GM13977 (cell line): ENCODE measurements at regions of chrX and their contacts with region 1.

Region 1: GRCh38 chrX:148049441-148049840 is 68.3 kb downstream of the FMR1NB start:
- DNase-seq: peak; percentile 49
- CTCF ChIP-seq: peak; percentile 47

Region 2: GRCh38 chrX:147850875-147851274 is 198.6 kb before region 1 on chrX:
- in situ Hi-C with region 1: no loop called
- DNase-seq: no peak
- CTCF ChIP-seq: no peak

Region 3: DNA sequence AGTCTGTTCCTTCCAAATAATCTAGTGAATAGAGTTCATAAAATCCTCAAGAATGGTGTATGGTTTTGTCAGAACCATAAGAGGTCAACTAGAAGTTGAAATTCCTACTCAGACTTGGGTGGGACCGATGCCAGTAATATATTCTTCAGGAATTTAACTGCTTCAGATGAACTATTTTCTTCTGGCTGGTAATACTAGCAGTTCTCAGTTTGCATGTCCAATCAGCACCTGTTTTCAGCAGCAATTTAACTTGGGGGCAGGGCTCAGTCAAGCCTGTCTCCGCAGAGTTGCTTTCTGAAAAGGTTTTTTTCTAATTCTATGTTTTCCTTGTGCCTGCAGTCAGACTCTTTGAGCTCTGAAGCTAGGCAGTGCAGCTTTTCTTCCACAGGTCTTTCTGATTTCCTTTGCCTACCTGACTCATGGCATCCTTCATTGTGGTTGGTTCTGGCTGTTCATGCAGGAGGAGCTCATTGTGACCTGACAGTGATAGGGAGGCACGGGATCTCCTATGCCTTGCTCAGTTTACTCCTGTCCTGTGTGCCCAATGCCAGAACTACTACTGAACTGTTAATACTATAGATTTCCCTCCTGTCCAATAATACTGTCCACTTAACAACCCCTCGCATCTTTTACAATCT is 155.0 kb before region 1 on chrX:
- in situ Hi-C with region 1: no loop called
- DNase-seq: no peak
- CTCF ChIP-seq: no peak

Region 4: GRCh38 chrX:149286940-149287349 is 1237.5 kb after region 1 on chrX:
- in situ Hi-C with region 1: loop called (anchors 25 kb)
- DNase-seq: peak; percentile 48
- CTCF ChIP-seq: peak; percentile 71

Region 5: DNA sequence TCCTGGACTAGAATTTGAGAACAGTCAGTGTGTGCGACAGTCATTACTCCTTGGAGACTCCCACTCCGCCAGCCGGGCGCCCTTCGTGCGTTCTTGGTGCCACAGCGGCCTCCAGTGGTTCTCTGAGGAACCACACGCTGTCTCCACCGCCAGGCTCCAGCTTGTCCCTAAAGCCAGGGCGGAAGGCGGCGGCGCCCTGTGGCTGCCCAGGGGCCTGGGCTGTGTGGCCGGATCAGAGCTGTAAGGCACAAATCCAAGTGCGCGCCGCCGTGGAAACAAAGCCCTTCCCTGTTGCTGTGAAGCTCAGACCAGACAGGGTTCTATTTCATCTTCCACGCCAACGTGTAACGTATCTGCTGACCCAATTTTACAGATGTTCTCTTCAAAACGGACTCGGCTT is 1421.5 kb after region 1 on chrX:
- in situ Hi-C with region 1: loop called (anchors 25 kb)
- DNase-seq: peak; percentile 61
- CTCF ChIP-seq: peak; percentile 91